Transverse colon (tissue), 4 donors: ENCODE measurements at regions of chr2 and their contacts with region 1.

Region 1: DNA sequence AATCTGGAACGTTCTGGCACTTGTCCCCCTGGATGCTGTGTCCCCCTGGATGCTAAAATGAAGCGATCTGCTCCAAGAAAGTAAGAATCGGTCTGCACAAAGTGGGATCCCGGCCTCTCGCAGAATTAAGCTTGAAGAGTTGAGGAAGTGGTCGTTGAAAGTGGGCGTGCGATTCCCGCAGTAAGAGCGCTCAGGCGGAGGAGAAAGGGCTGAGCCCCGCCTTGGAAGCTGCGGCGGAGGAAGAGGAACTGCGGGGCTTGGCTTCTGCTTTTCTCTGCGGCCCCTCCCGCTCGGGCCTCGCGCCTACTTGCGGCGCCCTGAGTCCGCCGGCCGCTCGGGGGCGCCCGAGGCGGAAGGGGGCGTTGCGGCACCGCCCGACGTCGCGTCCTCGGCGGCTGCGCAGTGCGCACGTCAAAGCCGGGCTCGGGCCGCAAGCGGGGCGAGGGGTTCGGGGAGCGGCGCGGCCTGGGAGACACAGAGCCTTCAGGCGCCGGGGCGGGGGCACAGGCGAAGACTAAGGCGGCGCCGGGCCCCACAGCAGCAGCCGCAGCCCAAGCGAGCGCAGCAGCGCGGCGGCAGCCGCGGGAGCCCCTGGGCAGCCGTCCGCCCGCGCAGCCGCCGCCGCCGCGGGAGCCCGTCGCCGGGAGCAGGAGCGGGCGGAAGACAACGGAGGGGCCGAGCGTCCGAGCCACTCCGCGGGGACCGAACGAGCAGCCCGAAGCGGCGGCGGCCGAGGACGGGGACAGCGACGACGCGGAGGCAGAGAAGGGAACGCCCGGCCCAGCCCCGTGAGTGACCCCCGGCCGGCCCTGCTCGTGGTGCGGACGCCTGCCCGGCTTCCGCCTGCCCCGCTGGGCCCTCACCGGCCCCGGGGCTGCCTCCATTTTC is at the start of gene CAB39:
- DNase-seq: peak; percentile 91
- H3K4me3 ChIP-seq: peak within 1 kb of the TSS; percentile 90 to 99 (median 96)
- H3K27ac ChIP-seq: peak within 1 kb of the TSS; percentile 98 to 99 (median 98)
- H3K4me1 ChIP-seq: peaks cover 28 to 57% (median 41%) of the 10 kb centered on the region in 4 donors
- H3K27me3 ChIP-seq: no peaks in the 10 kb centered on the region
- CTCF ChIP-seq: peak; percentile 47 to 85 (median 76)
- EP300 ChIP-seq: no peak
- POLR2A ChIP-seq: peak; percentile 80
- total RNA-seq, gene CAB39: 67.3 to 137 (median 123) TPM

Region 2: GRCh38 chr2:229937523-229937922 is 775.2 kb before region 1 on chr2:
- in situ Hi-C with region 1: no loop called
- intact Hi-C with region 1: loop called (anchors 5 kb)
- DNase-seq: no peak
- H3K4me3 ChIP-seq: no peak overlapping the region
- H3K27ac ChIP-seq: no peak overlapping the region
- H3K4me1 ChIP-seq: no peaks in the 10 kb centered on the region
- H3K27me3 ChIP-seq: no peaks in the 10 kb centered on the region
- CTCF ChIP-seq: no peak
- EP300 ChIP-seq: no peak
- POLR2A ChIP-seq: no peak

Region 3: DNA sequence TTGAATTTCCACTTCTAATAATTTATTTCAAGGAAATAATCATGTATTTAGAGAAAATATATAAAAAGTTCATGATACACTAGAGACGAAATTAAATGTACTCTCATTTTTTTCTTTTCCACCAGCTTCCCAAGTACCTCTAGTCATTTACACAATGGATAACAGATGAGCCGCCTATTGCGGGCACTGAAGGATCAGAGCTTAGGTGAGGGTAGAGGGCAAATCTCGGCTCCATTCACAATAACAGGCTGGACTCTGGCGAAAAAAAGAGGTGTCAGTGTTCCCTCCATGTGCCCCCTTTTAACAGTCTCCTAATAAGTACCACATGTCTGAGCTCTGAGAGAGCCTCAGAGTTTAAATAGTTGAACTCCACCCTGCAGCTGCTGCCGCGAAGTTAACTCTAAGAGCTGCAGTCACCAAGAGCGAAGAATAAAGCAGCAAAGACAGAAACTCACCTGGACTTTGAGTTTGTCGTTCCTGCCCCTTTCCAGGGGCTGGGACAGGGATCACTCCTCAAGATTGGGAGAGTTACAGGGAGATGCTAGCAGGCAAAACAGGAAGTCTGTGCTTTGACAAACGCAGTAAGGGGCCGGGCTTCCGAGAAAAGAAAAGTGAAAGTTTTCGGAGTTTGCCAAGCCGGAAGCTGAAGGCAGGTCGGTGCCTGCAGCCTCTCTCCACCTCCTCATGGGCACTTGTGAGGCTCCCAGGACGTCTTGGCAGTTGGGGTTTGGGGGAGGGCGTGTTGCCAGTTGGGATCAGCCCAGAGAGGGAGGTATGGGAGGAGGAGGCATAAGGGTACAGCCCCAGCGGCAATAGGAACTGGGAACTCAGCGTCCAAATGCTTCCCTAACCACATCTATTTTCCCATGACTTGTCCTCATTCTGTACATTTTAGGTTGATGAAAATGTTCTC is 493.0 kb before region 1 on chr2 and contains the start of gene SP110:
- in situ Hi-C with region 1: no loop called
- intact Hi-C with region 1: no loop called
- DNase-seq: peak; percentile 86
- H3K4me3 ChIP-seq: peak within 1 kb of the TSS; percentile 47 to 81 (median 66)
- H3K27ac ChIP-seq: peak within 1 kb of the TSS; percentile 77 to 87 (median 86)
- H3K4me1 ChIP-seq: peaks cover 0 to 22% (median 10%) of the 10 kb centered on the region in 4 donors
- H3K27me3 ChIP-seq: no peaks in the 10 kb centered on the region
- CTCF ChIP-seq: no peak
- EP300 ChIP-seq: no peak
- POLR2A ChIP-seq: peak; percentile 63
- total RNA-seq, gene SP110: 15.0 to 38.4 (median 29.5) TPM

Region 4: DNA sequence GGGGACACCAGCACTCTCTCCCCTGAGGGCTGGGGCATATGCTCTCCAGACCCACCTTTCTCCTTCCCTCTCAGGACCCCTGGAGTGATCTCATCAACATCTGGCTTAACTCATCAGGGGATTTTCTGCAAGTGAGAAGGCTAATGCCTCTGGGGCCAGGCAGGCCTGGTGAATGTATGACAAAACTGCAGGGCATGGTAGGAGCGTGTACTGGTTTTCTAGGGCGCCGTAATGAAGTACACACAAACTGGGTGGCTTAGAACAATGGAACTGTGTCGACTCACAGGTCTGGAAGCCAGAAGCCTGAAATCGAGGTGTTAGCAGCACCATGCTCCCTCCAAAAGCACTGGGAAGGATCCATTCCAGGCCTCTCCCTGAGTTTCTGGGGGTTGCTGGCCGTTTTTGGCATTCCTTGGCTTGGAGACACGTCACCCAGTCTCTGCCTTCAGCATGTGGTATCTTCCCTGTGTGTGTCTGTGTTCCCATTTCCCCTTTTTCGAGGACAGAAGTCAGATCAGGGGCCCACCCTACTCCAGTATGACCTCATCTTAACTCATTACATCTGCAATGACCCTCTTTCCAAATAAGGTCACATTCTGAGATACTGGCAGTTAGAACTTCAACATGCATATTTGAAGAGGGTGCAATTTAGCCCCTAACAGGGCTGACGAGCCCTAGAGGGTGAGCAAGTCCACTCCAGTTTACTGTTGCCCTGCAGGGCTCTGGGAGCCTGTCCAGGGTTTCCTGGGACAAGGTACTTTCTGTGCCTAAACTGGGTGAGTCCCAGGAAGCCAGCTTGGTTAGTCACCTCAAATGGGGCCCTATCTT is 45.6 kb before region 1 on chr2:
- in situ Hi-C with region 1: no loop called
- intact Hi-C with region 1: no loop called
- DNase-seq: peak; percentile 44
- H3K4me3 ChIP-seq: no peak overlapping the region
- H3K27ac ChIP-seq: peak overlapping the region; percentile 10 to 67 (median 39)
- H3K4me1 ChIP-seq: peaks cover 0 to 45% (median 15%) of the 10 kb centered on the region in 4 donors
- H3K27me3 ChIP-seq: no peaks in the 10 kb centered on the region
- CTCF ChIP-seq: no peak
- EP300 ChIP-seq: no peak
- POLR2A ChIP-seq: no peak

Region 5: DNA sequence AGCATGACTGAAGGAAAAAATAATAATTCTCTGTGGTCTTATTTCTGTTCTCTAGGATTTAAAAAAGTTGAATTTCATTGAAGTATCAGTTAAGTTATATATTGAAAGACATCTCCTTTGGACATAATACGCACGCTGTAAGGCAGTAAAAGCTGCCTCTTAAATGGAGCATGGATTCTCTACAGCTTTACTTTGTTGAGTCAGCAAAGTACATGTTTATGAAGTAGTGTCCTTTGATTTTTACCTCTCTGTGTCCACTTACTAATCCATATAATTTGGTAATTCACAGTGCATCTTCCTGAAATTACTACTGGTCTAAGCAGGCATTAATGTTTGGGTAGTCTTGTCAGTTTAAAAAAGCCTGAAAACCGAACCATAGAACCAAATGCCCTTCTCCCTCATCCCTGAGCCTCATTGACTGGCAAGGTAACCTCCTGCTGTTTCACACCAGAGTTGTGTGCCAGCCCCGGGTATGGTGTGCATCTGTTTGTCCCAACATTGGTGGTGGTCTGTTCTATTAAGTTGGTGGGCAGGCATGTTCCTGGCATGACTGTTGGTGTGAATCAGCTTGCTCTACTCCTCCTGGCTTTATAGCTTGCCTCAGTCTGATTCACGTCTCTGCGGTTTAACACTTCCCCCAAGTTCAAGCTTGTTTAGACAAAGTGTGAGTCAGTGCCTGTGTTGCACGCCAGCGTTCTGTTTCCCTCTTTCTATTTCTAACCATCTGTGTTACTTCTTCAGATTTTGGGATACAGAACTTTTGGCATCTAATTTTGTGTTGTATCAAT is 81.1 kb after region 1 on chr2:
- in situ Hi-C with region 1: loop called in 1 of 4 experiments (anchors 10 kb)
- intact Hi-C with region 1: loop called (anchors 5 kb)
- DNase-seq: peak; percentile 70
- H3K4me3 ChIP-seq: no peak overlapping the region
- H3K27ac ChIP-seq: peak overlapping the region; percentile 67 to 88 (median 84)
- H3K4me1 ChIP-seq: peaks cover 30 to 59% (median 43%) of the 10 kb centered on the region in 4 donors
- H3K27me3 ChIP-seq: no peaks in the 10 kb centered on the region
- CTCF ChIP-seq: no peak
- EP300 ChIP-seq: no peak
- POLR2A ChIP-seq: peak; percentile 30

Region 6: GRCh38 chr2:230798769-230799399 is 86.2 kb after region 1 on chr2:
- in situ Hi-C with region 1: loop called in 2 of 4 experiments (anchors 10 to 25 kb)
- intact Hi-C with region 1: loop called (anchors 5 kb)
- DNase-seq: no peak
- H3K4me3 ChIP-seq: no peak overlapping the region
- H3K27ac ChIP-seq: peak overlapping the region in 1 of 4 donors; percentile 19
- H3K4me1 ChIP-seq: peaks cover 30 to 44% (median 36%) of the 10 kb centered on the region in 4 donors
- H3K27me3 ChIP-seq: no peaks in the 10 kb centered on the region
- CTCF ChIP-seq: peak; percentile 58 to 70 (median 65)
- EP300 ChIP-seq: no peak
- POLR2A ChIP-seq: no peak

Region 7: DNA sequence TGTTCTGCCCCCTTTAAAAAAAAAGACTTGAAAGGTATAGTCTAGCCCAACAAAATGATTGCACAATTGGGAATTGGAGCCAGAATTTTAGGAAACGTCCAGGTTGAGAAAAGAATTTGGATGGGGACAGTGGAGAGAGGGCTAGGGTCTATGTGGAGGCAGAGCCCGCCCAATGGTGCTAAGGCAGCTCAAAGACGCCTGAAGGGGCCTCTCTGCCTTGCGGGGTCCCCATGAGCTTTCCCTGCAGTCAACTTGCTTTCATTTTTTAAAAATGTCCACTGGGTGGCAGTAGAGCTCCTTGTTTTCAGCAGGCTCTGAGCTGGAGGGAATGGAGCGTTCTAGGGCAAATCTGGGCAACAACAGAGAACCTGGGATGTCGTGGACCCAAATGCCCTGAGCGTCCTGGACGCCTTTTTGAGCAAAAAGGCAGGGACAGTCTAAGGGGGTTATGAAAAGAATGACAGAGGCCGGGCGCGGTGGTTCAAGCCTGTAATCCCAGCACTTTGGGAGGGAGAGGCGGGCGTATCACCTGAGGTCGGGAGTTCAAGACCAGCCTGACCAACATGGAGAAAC is 111.8 kb after region 1 on chr2:
- in situ Hi-C with region 1: loop called in 1 of 4 experiments (anchors 25 kb)
- intact Hi-C with region 1: no loop called
- DNase-seq: peak; percentile 45
- H3K4me3 ChIP-seq: peak overlapping the region in 2 of 4 donors; percentile 17 to 23
- H3K27ac ChIP-seq: no peak overlapping the region
- H3K4me1 ChIP-seq: peaks cover 0 to 16% (median 12%) of the 10 kb centered on the region in 4 donors
- H3K27me3 ChIP-seq: peaks cover 35% of the 10 kb centered on the region
- CTCF ChIP-seq: peak; percentile 64 to 80 (median 76)
- EP300 ChIP-seq: no peak
- POLR2A ChIP-seq: no peak